Mammary epithelial cell (primary cell): ENCODE measurements at regions of chr1 and their contacts with region 1.

Region 1: DNA sequence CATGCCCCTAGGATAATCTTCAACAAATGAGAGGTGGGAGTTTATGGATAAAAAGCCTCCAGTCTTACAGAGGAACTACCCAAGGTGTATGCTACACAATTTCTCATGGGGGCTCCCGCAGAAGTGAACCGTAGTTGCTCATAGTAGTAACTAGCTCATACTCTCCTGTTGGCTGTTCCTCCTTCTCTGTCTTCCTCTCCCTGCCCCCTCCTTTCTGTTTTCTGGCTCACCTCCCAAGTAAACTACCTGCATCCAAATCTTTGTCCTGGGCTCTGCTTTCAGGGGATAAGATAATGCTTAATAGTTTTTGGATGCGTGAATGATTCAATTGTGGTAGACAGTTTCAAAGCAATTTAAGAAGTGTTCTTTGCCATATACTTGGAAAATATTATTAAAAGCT is 90.1 kb upstream of the ROR1 start:
- DNase-seq: no peak
- H3K4me3 ChIP-seq: no peak overlapping the region
- H3K27ac ChIP-seq: no peak overlapping the region
- H3K4me1 ChIP-seq: peaks cover 4% of the 10 kb centered on the region
- H3K27me3 ChIP-seq: no peaks in the 10 kb centered on the region
- CTCF ChIP-seq: no peak

Region 2: DNA sequence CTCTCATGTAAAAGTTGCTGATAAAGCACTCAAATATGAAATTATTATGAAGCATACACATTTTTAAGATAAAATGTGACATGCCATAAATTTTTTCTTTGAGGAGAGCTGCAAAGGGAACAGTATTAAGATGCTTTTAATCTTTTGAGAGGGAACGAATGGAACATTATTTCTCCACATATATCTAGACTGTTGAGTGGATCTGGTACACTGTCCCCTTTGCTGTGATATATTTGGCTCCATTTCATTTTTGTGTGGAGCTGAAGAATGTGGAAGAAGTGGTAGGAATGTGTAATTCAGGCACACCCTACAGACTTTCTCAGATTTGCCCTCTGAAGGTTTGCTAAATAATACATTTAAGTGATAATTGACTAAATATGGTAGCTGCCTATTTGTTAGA is 58.8 kb before region 1 on chr1:
- CTCF ChIA-PET with region 1: no interaction called
- dilution Hi-C with region 1: loop called (anchors 5 kb)
- in situ Hi-C with region 1: no loop called
- intact Hi-C with region 1: no loop called
- DNase-seq: no peak
- H3K4me3 ChIP-seq: no peak overlapping the region
- H3K27ac ChIP-seq: no peak overlapping the region
- H3K4me1 ChIP-seq: peaks cover 30% of the 10 kb centered on the region
- H3K27me3 ChIP-seq: no peaks in the 10 kb centered on the region
- CTCF ChIP-seq: peak; percentile 12 to 31

Region 3: GRCh38 chr1:63651161-63651701 is 32.5 kb before region 1 on chr1:
- CTCF ChIA-PET with region 1: no interaction called
- dilution Hi-C with region 1: no loop called
- in situ Hi-C with region 1: no loop called
- intact Hi-C with region 1: no loop called
- DNase-seq: peak; percentile 56
- H3K4me3 ChIP-seq: no peak overlapping the region
- H3K27ac ChIP-seq: no peak overlapping the region
- H3K4me1 ChIP-seq: no peaks in the 10 kb centered on the region
- H3K27me3 ChIP-seq: no peaks in the 10 kb centered on the region
- CTCF ChIP-seq: no peak

Region 4: GRCh38 chr1:63746129-63746864 is 62.5 kb after region 1 on chr1:
- CTCF ChIA-PET with region 1: no interaction called
- dilution Hi-C with region 1: loop called (anchors 5 kb)
- in situ Hi-C with region 1: no loop called
- intact Hi-C with region 1: no loop called
- DNase-seq: no peak
- H3K4me3 ChIP-seq: no peak overlapping the region
- H3K27ac ChIP-seq: no peak overlapping the region
- H3K4me1 ChIP-seq: no peaks in the 10 kb centered on the region
- H3K27me3 ChIP-seq: no peaks in the 10 kb centered on the region
- CTCF ChIP-seq: no peak

Region 5: DNA sequence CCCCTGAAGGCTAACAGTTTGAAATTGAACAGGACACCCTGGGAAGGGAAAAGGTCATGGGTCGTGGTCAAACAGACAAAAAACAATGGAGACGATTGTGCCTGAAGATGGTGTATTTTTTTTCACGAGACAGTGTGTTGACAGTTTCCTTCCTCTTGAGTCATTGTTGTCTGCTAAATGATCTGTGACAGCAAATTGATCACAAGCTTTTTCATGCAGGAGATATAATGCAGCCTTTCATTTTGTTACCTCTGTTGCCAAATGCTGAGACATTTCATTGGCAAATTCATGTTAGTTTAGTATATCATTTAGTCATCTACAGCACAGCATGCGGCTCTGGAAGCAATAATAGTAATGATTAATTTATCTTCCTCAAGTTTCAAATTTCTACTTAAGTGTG is 547.4 kb after region 1 on chr1:
- CTCF ChIA-PET with region 1: no interaction called
- dilution Hi-C with region 1: loop called (anchors 5 kb)
- in situ Hi-C with region 1: no loop called
- intact Hi-C with region 1: no loop called
- DNase-seq: peak; percentile 60
- H3K4me3 ChIP-seq: no peak overlapping the region
- H3K27ac ChIP-seq: no peak overlapping the region
- H3K4me1 ChIP-seq: peaks cover 5% of the 10 kb centered on the region
- H3K27me3 ChIP-seq: no peaks in the 10 kb centered on the region
- CTCF ChIP-seq: no peak